ENCODE measurements at regions of chr10 and their contacts with region 1.

Region 1: DNA sequence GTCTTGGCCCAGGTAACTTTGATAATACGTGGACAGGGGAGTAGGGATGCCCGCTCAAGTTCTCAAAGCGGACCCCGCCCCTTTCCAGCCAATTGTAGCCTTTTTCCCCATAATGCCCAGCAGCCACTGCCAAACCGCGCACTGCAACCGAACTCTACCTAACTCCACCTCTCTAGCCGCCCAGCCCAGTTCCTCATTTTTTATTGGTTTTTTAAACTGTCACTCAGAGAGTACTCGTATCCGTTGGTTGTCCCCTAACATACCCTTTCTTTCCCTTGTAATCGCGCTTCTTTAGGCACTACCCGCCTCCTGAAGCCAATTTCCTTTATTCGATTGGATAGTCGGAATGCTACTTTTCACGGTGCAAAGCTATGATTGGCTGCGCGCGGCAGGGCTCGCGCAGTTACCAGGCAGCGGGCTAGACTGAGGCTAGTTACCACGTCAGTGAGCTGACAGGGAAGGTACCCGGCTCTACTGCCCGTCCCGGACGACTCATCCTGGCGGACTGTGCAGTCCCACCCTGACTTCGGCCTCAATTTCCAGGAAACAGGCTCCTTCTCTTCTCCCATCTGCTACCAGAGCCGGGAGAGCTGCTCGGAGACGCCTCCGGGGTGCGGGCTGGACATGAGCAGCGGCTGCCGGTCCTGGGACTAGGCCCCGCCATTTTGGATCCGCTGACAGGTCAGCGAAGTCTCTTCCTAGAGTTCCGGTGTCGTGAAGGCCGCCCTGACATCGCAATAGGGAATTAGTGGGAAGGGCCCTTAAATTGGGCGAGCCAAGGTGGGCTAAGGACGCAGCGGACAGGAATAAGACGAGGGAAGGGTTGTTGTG is at the start of gene GBF1:
- DNase-seq: peak; percentile 100
- H3K4me3 ChIP-seq: peak within 1 kb of the TSS; percentile 96
- H3K27me3 ChIP-seq: peaks cover 5% of the 10 kb centered on the region
- CTCF ChIP-seq: no peak
- polyA plus RNA-seq, gene GBF1: 19.0 and 28.4 TPM in 2 replicates

Region 2: GRCh38 chr10:102231357-102232318 is 13.7 kb before region 1 on chr10:
- CTCF ChIA-PET with region 1: interaction called, 31 read pairs
- POLR2A ChIA-PET with region 1: interaction called, 3 read pairs
- DNase-seq: no peak
- H3K4me3 ChIP-seq: no peak overlapping the region; the same call in 1 of the 2 replicates
- H3K27me3 ChIP-seq: peaks cover 25% of the 10 kb centered on the region
- CTCF ChIP-seq: peak; percentile 86

Measured in BJ (cell line).